Naive thymus-derived CD4-positive, alpha-beta T cell (primary cell): ENCODE measurements at regions of chr18 and their contacts with region 1.

Region 1: DNA sequence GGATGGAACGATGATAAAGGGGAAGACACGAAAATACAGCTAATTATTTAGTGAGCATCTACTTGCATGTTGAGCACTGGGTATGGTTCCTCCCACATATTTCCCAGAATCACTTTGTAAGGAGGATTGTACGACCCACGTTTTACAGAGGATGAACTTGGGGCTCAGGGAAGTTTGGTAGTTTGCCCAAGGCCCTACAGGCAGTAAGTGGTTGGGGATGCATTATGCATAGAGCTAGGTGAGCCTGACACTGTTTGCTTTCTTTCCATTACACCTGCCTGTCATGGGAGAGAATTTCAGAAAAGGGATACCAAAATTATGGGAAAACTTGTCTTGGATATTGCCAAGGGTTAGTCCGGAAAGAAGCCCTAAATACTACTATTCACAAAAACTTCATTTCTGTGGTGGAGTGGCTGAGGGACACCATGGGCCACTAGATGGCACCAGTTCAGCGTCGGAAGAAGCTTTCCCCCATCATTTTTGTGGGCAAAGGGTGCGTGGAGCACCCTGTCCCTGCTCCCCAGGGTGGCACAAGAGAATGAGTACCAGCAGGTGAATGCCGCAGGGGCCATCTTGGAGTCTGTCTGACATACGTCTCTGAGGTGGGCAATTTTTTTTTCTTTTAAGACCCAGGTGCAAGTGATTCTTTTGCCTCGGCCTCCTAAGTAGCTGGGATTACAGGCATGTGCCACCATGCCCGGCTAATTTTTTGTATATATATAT is 23.5 kb upstream of the C18orf32 start:
- DNase-seq: peak in 7 of 9 donors; percentile 31 to 56 (median 46)
- ATAC-seq: peak; percentile 85
- H3K4me3 ChIP-seq: no peak overlapping the region
- H3K4me3 Mint-ChIP-seq: no peak overlapping the region
- H3K27ac ChIP-seq: no peak overlapping the region
- H3K27ac Mint-ChIP-seq: no peak overlapping the region
- H3K4me1 ChIP-seq: no peaks in the 10 kb centered on the region
- H3K4me1 Mint-ChIP-seq: no peaks in the 10 kb centered on the region
- H3K27me3 ChIP-seq: no peaks in the 10 kb centered on the region
- H3K27me3 Mint-ChIP-seq: peaks cover 8 to 22% (median 15%) of the 10 kb centered on the region in 5 donors

Region 2: GRCh38 chr18:50194631-50195532 is 684.3 kb after region 1 on chr18 and contains the start of gene MYO5B:
- CTCF ChIA-PET with region 1: no interaction called
- POLR2A ChIA-PET with region 1: no interaction called
- intact Hi-C with region 1: loop called (anchors 2 to 10 kb)
- DNase-seq: peak in 7 of 9 donors; percentile 29 to 70 (median 42)
- ATAC-seq: peak; percentile 90
- H3K4me3 ChIP-seq: peak within 1 kb of the TSS; percentile 13
- H3K4me3 Mint-ChIP-seq: peak within 1 kb of the TSS; percentile 39 to 82 (median 66)
- H3K27ac ChIP-seq: no peak within 1 kb of the TSS
- H3K27ac Mint-ChIP-seq: peak within 1 kb of the TSS in 1 of 9 donors; percentile 59
- H3K4me1 ChIP-seq: peaks cover 0 to 5% of the 10 kb centered on the region in 2 donors
- H3K4me1 Mint-ChIP-seq: peaks cover 6 to 20% (median 17%) of the 10 kb centered on the region in 7 donors
- H3K27me3 ChIP-seq: peaks cover 0 to 18% of the 10 kb centered on the region in 2 donors
- H3K27me3 Mint-ChIP-seq: peaks cover 62 to 79% (median 72%) of the 10 kb centered on the region in 5 donors
- total RNA-seq, gene MYO5B: not detected